ENCODE measurements at regions of chr2 and their contacts with region 1.

Region 1: DNA sequence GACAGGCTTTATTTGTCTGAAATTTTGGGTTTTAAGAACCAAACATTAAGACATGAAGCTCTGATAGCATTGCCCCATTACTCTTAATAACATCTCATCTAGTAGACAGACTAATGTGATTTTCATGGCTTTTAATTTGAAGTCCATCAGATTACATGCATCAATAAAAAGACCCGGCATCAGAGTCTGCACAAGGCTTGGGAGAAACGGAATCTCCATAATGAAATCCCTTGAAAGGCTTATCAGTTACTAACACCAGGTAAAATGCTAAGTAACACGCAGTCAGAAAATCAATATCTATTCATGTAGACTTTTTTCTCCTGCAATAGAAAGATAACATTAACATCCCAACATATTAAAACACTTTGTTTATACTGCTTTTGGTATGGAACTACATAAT is 1485.2 kb upstream of the DDX18 start:
- DNase-seq: no peak
- H3K4me3 ChIP-seq: no peak overlapping the region
- H3K27ac ChIP-seq: no peak overlapping the region
- H3K4me1 ChIP-seq: no peaks in the 10 kb centered on the region
- H3K27me3 ChIP-seq: no peaks in the 10 kb centered on the region
- CTCF ChIP-seq: no peak
- EP300 ChIP-seq: no peak
- POLR2A ChIP-seq: no peak

Region 2: DNA sequence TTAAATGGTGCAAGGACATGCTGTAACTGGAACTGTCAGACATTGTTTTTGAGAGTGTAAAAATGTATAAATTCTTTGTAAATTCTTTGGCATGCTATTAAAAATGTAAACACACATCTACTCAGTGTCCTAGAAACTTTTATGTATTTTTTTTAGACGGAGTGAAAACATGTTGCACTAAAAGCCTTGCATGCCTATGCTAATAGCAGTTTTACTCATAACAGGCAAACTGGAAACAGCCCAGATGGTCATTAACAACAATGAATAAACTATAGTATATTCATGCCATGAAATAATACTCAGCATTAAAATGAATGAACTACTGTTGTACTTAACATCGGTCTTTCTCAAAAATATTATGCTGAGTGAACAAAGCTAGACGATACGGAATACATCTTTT is 530.4 kb after region 1 on chr2:
- in situ Hi-C with region 1: no loop called
- intact Hi-C with region 1: loop called (anchors 5 kb)
- DNase-seq: no peak
- H3K4me3 ChIP-seq: no peak overlapping the region
- H3K27ac ChIP-seq: no peak overlapping the region
- H3K4me1 ChIP-seq: no peaks in the 10 kb centered on the region
- H3K27me3 ChIP-seq: no peaks in the 10 kb centered on the region
- CTCF ChIP-seq: no peak
- EP300 ChIP-seq: no peak
- POLR2A ChIP-seq: no peak

Measured in transverse colon (tissue), 4 donors.